Ovary (tissue), 10 donors: ENCODE measurements at regions of chr2 and their contacts with region 1.

Region 1: DNA sequence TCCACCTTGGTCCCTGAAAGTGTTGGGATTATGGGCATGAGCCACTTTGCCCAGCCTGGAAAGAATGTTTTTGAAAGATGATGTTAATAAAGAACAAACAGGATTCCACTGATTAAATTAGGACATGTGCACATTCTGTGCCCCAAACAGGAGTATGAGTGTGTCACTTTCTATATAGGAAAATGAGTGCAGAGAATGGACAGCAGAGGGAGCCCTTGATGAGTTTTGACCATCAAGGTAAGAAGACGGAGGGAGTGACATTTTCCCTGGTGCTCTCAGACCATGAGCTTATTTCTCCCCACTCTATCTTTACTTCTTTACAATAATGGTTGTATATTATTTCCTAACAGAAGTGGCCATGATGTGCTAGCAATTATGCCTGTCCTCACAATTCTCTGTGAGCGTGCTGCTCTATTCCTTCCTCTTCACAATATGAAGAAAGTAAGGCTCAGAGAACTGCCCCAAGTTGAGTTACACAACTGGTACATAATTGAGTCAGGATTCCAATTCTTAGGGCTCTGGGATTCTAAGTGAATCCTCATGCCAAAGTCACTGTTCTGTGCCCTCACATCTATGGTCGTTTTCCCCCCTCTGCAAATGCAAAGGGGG is 20.6 kb downstream of the RPL37A start:
- DNase-seq: peak in 4 of 5 donors; percentile 48 to 81 (median 74)
- H3K4me3 ChIP-seq: no peak overlapping the region
- H3K27ac ChIP-seq: no peak overlapping the region
- H3K4me1 ChIP-seq: no peaks in the 10 kb centered on the region
- H3K27me3 ChIP-seq: no peaks in the 10 kb centered on the region
- CTCF ChIP-seq: peak; percentile 63 to 82 (median 74)
- EP300 ChIP-seq: no peak
- POLR2A ChIP-seq: no peak

Region 2: GRCh38 chr2:216426938-216427337 is 92.3 kb before region 1 on chr2:
- intact Hi-C with region 1: no loop called
- DNase-seq: no peak
- H3K4me3 ChIP-seq: no peak overlapping the region
- H3K27ac ChIP-seq: no peak overlapping the region
- H3K4me1 ChIP-seq: no peaks in the 10 kb centered on the region
- H3K27me3 ChIP-seq: no peaks in the 10 kb centered on the region
- CTCF ChIP-seq: no peak
- EP300 ChIP-seq: no peak
- POLR2A ChIP-seq: no peak

Region 3: GRCh38 chr2:216666461-216667233 is 147.4 kb after region 1 on chr2:
- intact Hi-C with region 1: loop called (anchors 1 to 2 kb)
- DNase-seq: peak; percentile 62 to 86 (median 77)
- H3K4me3 ChIP-seq: no peak overlapping the region
- H3K27ac ChIP-seq: no peak overlapping the region
- H3K4me1 ChIP-seq: peaks cover 12% of the 10 kb centered on the region
- H3K27me3 ChIP-seq: no peaks in the 10 kb centered on the region
- CTCF ChIP-seq: peak; percentile 91 to 96 (median 95)
- EP300 ChIP-seq: no peak
- POLR2A ChIP-seq: no peak

Region 4: DNA sequence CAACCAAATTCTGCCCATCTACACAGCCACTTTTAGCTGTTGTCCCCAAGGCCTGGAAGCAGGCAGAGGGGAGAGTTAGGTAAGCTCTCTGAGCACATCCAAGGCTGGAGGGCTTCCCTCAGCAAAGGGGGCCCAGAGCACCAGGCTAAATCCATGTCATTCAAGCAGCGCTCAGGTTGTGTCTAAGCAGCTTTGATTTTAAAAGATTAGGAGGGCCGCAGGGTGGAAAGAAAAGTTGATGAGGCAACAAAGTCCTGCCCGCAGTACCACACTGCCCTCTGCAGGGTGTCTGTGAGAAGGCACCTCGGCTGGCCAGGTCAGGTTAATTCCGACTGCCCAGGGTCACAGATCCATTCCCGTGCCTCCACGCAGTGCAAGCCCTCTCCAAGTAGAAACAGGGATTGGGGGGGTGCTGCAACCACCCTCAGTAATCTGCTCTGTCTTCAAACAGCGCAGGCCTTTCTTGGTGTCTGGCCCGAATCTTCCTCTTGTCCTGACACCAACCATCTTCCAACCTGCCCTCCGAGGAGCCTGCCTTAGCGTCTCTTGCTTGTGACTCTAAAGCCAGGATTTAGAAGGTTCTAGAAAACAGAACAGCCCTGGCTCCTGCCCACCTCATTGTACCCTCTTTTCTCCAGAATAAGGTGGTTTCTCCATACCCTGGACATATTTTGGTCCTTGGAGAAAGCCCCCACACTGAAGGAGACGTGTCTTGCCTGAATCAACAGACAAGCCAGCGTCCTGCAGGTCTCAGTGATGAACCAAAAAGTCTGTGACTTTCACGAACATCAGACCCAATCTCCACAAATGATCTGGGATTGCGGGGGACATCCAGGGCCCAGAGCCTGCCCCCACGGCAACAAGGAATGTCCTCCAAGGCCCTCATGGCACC is 1194.4 kb after region 1 on chr2:
- intact Hi-C with region 1: loop called in 2 of 4 experiments (anchors 10 kb)
- DNase-seq: peak; percentile 73 to 89 (median 84)
- H3K4me3 ChIP-seq: no peak overlapping the region
- H3K27ac ChIP-seq: peak overlapping the region in 1 of 2 donors; percentile 2
- H3K4me1 ChIP-seq: peaks cover 11% of the 10 kb centered on the region
- H3K27me3 ChIP-seq: no peaks in the 10 kb centered on the region
- CTCF ChIP-seq: peak; percentile 94 to 95 (median 95)
- EP300 ChIP-seq: no peak
- POLR2A ChIP-seq: no peak

Region 5: DNA sequence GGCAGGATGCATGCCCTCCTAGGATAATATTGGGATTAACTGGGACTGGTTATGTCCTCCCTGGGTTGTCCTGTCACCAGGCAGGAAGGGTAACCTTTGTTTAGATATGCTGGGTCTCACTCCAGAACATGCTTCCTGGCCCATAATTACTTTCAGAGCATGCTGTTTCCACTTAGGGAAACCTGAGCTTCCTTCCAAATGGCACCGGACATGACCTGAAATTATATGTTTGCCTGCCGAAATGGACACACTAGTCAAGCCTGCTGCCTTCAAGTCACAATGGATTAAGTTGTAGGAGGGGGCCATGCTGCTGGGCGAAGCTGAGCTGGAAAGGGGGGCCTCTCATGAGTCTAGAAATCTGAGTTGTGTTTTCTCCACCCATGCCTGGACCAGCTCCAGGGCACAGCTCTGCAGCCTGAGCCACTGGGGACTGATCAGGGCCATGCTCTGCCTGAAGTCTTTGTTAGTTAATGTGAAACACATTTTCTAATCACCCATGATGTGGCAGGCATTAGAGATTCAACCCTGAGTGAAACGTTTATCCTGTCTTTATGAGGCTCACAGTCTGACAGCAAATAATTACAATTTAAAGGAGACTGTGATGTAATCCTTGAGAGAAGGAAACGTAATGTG is 1210.3 kb after region 1 on chr2:
- intact Hi-C with region 1: loop called in 1 of 4 experiments (anchors 10 kb)
- DNase-seq: peak in 1 of 5 donors; percentile 56
- H3K4me3 ChIP-seq: no peak overlapping the region
- H3K27ac ChIP-seq: no peak overlapping the region
- H3K4me1 ChIP-seq: peaks cover 2% of the 10 kb centered on the region
- H3K27me3 ChIP-seq: no peaks in the 10 kb centered on the region
- CTCF ChIP-seq: no peak
- EP300 ChIP-seq: no peak
- POLR2A ChIP-seq: no peak

Region 6: DNA sequence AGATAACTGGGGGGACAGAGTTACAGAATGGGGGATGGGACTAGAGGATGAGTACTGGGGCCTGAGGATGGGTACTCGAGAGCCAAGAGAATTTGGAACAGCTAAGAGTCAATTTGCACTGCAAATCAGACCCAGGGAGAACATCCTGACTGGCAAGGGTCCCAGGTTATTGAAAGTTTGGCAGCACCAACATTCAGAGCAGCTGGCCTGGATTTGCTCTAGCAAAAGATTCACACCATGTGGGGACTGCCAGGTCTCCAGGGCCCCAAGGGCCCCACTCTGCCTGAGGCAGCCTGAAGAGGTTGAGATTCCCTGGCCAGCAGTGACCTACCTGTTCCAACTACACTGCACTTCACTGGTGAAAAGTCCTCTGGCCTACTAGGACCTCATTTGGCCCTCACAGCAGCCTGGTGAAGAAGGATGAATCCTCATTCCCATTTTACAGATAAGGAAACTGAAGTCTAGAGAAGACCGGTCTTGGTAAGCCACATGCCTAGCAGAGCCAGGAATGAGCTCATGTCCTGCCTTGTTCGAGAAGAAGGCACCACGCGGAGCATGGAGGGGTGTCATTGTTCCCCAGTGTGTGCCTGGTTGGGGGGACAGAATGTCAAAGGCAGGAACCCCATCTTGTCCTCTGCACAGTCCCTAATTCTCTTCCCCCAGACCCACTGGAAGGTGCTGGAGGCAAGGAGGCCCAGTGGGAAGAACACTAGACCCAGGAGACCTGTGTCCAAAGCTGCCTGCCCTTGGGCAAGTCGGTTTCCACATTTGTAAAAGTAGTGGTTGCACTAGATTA is 1224.9 kb after region 1 on chr2:
- intact Hi-C with region 1: loop called in 1 of 4 experiments (anchors 10 kb)
- DNase-seq: no peak
- H3K4me3 ChIP-seq: no peak overlapping the region
- H3K27ac ChIP-seq: no peak overlapping the region
- H3K4me1 ChIP-seq: no peaks in the 10 kb centered on the region
- H3K27me3 ChIP-seq: no peaks in the 10 kb centered on the region
- CTCF ChIP-seq: no peak
- EP300 ChIP-seq: no peak
- POLR2A ChIP-seq: no peak

Region 7: DNA sequence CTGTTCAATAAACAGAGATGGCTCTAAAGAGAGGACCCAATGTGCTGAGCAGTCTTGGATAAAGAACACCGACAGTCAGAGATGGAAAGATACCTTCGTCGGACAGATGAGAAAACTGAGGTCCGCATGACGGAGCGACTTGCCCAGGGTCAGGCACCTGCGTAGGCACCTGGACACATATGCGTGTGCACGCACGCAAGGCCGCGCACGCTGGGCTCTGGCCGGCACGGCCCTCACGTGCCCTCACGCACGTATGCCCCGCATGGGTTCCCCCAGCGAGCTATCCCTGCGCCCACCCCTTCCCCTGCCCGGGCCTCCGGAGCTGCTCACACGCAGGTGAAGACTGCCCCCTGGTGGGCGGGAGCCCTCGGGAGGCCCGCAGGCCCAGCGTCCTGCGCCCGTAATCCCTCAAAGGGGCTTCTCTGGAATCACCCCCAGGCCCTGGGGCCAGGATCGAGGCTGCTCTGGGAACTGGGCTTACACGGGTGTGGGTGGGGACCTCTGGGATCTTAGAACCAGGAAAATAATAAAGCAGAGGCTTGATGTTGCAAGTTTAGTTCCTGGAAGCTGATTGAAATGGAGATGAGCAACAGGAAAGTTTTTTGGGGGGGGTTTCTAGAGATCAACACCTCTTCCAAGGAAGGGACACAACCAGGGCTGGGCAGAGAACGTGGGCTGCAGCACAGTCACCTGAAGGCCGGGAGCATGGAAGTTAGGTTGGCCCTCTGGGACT is 1237.3 kb after region 1 on chr2:
- intact Hi-C with region 1: loop called in 2 of 4 experiments (anchors 10 kb)
- DNase-seq: peak; percentile 82 to 92 (median 89)
- H3K4me3 ChIP-seq: peak overlapping the region; percentile 7
- H3K27ac ChIP-seq: no peak overlapping the region
- H3K4me1 ChIP-seq: no peaks in the 10 kb centered on the region
- H3K27me3 ChIP-seq: no peaks in the 10 kb centered on the region
- CTCF ChIP-seq: peak; percentile 83 to 93 (median 92)
- EP300 ChIP-seq: no peak
- POLR2A ChIP-seq: no peak

Region 8: DNA sequence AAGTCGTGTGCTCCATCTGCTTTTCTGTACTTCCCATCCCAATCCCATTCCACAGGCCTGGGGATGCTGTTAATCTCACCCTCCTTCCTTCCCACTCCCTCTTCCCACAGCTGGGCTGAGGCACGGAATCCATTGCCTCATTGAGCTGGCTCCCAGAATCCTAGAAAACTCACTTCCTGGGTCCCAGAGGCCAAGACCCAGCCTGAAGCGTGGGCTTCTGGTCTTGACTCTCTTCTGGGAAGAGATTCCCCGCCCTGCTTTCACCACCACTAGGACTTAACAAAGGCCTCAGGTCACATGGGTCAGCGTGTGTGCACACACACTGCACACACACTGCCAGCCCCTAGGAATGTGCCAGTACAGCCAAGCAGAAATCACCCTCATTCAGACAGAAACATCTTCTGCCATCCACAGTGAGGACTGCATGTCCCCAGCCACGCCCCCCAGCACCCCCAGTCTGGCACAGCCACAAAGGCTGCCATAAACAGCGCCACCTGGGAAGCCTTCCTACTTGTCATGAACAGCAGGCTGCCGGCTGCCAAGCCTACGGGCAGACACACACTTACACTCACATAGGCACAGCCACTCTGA is 1317.7 kb after region 1 on chr2:
- intact Hi-C with region 1: loop called in 1 of 4 experiments (anchors 10 kb)
- DNase-seq: peak in 3 of 5 donors; percentile 35 to 66 (median 62)
- H3K4me3 ChIP-seq: no peak overlapping the region
- H3K27ac ChIP-seq: peak overlapping the region in 1 of 2 donors; percentile 8
- H3K4me1 ChIP-seq: peaks cover 23% of the 10 kb centered on the region
- H3K27me3 ChIP-seq: no peaks in the 10 kb centered on the region
- CTCF ChIP-seq: no peak
- EP300 ChIP-seq: no peak
- POLR2A ChIP-seq: no peak